Calu3 (cell line): ENCODE measurements at regions of chr1 and their contacts with region 1.

Region 1: DNA sequence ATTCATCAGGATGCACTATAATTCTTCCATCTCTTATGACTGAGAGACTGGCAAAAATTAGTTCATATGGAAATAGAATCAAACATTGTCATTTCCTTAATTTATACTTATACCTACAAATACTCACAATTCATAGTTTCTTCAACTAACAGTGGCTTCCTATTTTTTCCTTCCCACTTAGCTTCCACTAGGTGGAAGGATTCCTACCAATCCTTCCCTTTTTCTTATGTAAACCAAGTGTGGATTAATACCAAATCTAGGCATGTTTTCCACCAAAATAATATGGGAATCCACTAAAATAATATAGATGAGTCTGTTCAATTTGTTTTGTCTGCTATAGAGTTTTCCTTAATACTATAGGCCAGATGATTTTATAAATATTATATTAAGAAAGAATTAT is 1537.1 kb downstream of the PLA2G4A start:
- DNase-seq: no peak
- H3K4me3 Mint-ChIP-seq: no peak overlapping the region
- H3K27ac Mint-ChIP-seq: no peak overlapping the region
- H3K4me1 Mint-ChIP-seq: no peaks in the 10 kb centered on the region
- H3K27me3 Mint-ChIP-seq: no peaks in the 10 kb centered on the region
- CTCF ChIP-seq: no peak

Region 2: GRCh38 chr1:187920976-187921831 is 444.7 kb before region 1 on chr1:
- CTCF ChIA-PET with region 1: no interaction called
- intact Hi-C with region 1: loop called (anchors 2 kb)
- DNase-seq: no peak
- H3K4me3 Mint-ChIP-seq: no peak overlapping the region
- H3K27ac Mint-ChIP-seq: no peak overlapping the region
- H3K4me1 Mint-ChIP-seq: peaks cover 13% of the 10 kb centered on the region
- H3K27me3 Mint-ChIP-seq: no peaks in the 10 kb centered on the region
- CTCF ChIP-seq: no peak

Region 3: GRCh38 chr1:188237571-188238353 is 128.1 kb before region 1 on chr1:
- CTCF ChIA-PET with region 1: no interaction called
- intact Hi-C with region 1: no loop called
- DNase-seq: peak; percentile 7
- H3K4me3 Mint-ChIP-seq: no peak overlapping the region
- H3K27ac Mint-ChIP-seq: no peak overlapping the region
- H3K4me1 Mint-ChIP-seq: peaks cover 36% of the 10 kb centered on the region
- H3K27me3 Mint-ChIP-seq: no peaks in the 10 kb centered on the region
- CTCF ChIP-seq: no peak

Region 4: GRCh38 chr1:188402986-188403385 is 37.1 kb after region 1 on chr1:
- CTCF ChIA-PET with region 1: no interaction called
- intact Hi-C with region 1: no loop called
- DNase-seq: no peak
- H3K4me3 Mint-ChIP-seq: no peak overlapping the region
- H3K27ac Mint-ChIP-seq: no peak overlapping the region
- H3K4me1 Mint-ChIP-seq: no peaks in the 10 kb centered on the region
- H3K27me3 Mint-ChIP-seq: no peaks in the 10 kb centered on the region
- CTCF ChIP-seq: no peak